Gastrocnemius medialis (tissue), 4 donors: ENCODE measurements at regions of chr5 and their contacts with region 1.

Region 1: DNA sequence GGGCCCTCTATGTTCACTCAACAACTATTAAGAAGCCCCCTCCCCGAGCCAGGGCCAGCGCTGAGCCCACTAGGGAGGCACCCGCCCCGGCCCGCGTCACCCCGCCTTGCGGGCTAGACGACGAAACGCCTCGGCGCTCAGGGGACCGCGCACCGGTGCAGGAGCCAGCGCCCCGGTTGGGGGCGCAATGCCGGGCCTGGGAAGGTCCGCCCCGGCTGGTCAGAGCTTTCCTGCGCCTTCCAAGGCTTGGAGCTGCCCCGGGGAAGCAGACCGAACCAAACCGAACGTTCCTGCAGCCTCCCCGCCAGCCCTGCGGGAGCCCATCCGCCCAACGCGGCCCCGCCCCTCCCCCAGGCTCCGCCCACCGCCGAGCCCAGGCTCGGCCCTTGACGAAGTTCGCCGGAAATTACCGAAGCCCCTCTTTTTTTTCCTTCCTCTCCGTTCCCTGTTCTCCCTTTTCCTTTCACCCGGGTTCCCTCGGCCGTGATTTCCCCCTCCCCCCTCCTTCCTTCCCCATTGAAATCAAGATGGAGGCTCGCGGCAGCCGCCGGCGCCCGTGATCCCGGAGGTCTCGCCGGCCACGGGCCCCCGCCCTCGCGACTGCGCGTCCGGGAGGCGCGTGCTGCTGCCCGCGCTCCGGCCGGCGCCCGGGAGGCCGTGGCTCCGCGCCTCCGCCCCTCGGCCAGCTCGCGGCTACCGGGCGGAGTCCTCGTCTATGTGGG is at the start of gene TRIO:
- DNase-seq: peak; percentile 85 to 88
- ATAC-seq: peak; percentile 71 to 77
- H3K4me3 ChIP-seq: peak within 1 kb of the TSS; percentile 72 to 92 (median 84)
- H3K27ac ChIP-seq: peak within 1 kb of the TSS; percentile 89 to 95 (median 92)
- H3K4me1 ChIP-seq: peaks cover 29 to 48% of the 10 kb centered on the region in 2 donors
- H3K27me3 ChIP-seq: no peaks in the 10 kb centered on the region
- CTCF ChIP-seq: peak; percentile 18 to 62 (median 51)
- POLR2A ChIP-seq: peak; percentile 74 to 84
- total RNA-seq, gene TRIO: 31.5 to 57.5 (median 50.4) TPM

Region 2: GRCh38 chr5:14035859-14036440 is 107.0 kb before region 1 on chr5:
- in situ Hi-C with region 1: no loop called
- intact Hi-C with region 1: loop called (anchors 5 kb)
- DNase-seq: peak in 1 of 2 donors; percentile 38
- ATAC-seq: peak; percentile 93 to 95
- H3K4me3 ChIP-seq: peak overlapping the region; percentile 21 to 50 (median 35)
- H3K27ac ChIP-seq: peak overlapping the region; percentile 64 to 76 (median 71)
- H3K4me1 ChIP-seq: peaks cover 18 to 32% of the 10 kb centered on the region in 2 donors
- H3K27me3 ChIP-seq: no peaks in the 10 kb centered on the region
- CTCF ChIP-seq: no peak
- POLR2A ChIP-seq: no peak

Region 3: GRCh38 chr5:14153932-14154731 is 11.1 kb after region 1 on chr5:
- in situ Hi-C with region 1: no loop called
- intact Hi-C with region 1: loop called (anchors 1 kb)
- DNase-seq: peak; percentile 60 to 78
- ATAC-seq: peak; percentile 86 to 89
- H3K4me3 ChIP-seq: peak overlapping the region; percentile 26 to 38 (median 30)
- H3K27ac ChIP-seq: peak overlapping the region; percentile 73 to 79 (median 76)
- H3K4me1 ChIP-seq: peaks cover 57 to 68% of the 10 kb centered on the region in 2 donors
- H3K27me3 ChIP-seq: no peaks in the 10 kb centered on the region
- CTCF ChIP-seq: no peak
- POLR2A ChIP-seq: peak; percentile 21 to 49

Region 4: DNA sequence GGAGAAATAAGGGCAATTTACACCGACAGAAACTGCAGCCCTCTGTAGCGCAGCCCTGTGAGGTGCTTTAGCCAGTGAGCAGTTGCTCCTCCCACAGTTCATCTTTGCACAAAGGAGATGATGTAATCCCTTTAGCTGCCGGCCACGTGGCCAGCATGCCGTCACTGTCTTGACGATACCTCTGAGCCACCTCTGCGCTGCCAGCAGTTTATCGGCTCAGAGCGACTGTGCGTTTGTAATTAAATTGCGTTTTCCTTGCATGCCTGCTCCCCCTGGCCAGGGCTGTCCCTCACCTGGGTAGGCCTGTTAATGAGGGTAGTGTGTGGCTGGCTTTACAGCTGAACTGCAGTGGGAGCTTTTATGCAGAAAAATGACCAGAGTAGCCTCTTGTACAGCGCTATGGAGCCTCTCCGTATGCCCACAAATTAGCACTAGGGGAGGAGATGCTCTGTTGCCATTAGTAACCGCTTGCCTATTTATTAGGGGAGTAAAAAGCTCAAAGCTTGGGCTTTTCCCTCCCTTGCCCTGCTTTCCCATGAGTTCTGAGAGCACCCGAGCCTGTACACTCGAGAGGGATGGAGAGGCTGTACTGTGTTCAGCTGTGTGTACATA is 107.2 kb after region 1 on chr5:
- in situ Hi-C with region 1: loop called in 1 of 4 experiments (anchors 10 kb)
- intact Hi-C with region 1: no loop called
- DNase-seq: peak; percentile 29 to 62
- ATAC-seq: peak; percentile 71 to 86
- H3K4me3 ChIP-seq: peak overlapping the region in 3 of 4 donors; percentile 32 to 39 (median 33)
- H3K27ac ChIP-seq: peak overlapping the region; percentile 57 to 75 (median 62)
- H3K4me1 ChIP-seq: peaks cover 44 to 53% of the 10 kb centered on the region in 2 donors
- H3K27me3 ChIP-seq: no peaks in the 10 kb centered on the region
- CTCF ChIP-seq: no peak
- POLR2A ChIP-seq: peak in 1 of 2 donors; percentile 38

Region 5: DNA sequence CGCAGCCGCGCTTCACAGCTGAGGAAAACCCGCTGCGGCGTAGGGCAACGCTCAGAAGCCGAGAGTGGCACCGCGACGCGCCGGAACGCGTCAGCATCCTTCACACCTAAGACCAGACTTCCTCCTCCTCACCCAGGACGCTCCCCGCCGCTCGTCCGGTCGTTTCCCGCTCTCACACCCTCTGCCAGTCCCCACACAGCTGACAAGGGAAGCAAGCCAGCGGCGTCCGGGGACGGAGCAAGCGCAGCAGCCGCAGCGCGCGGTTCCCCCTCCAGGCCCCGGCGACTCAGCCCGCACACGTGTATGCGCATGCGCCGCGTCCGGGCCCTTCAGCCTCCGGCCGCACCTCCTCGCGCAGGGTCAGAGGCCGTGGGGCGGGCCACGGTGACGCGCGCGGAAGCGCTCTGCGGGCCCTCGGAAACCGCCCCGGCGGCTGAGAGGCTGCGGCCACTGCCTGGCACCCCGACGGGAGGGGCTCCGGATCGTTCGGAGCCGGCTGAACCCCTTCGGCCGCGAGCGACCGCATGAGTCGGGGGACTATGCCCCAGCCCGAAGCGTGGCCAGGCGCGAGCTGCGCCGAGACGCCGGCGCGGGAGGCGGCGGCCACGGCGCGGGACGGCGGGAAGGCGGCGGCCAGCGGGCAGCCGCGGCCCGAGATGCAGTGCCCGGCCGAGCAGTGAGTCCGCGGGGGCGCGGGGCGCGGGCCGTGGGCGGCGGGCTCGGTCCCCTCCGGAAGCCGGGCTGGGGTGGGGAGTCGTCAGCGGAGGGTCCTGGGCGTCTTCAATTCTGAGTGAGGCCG is 521.5 kb after region 1 on chr5 and contains the start of gene OTULIN:
- in situ Hi-C with region 1: no loop called
- intact Hi-C with region 1: loop called (anchors 10 kb)
- DNase-seq: peak; percentile 78 to 85
- ATAC-seq: peak; percentile 93 to 94
- H3K4me3 ChIP-seq: peak within 1 kb of the TSS; percentile 54 to 83 (median 70)
- H3K27ac ChIP-seq: peak within 1 kb of the TSS; percentile 81 to 90 (median 86)
- H3K4me1 ChIP-seq: peaks cover 26 to 31% of the 10 kb centered on the region in 2 donors
- H3K27me3 ChIP-seq: no peaks in the 10 kb centered on the region
- CTCF ChIP-seq: peak in 1 of 5 experiments; percentile 8
- POLR2A ChIP-seq: peak; percentile 92 to 95
- total RNA-seq, gene OTULIN: 15.1 to 28.3 (median 20.2) TPM